ENCODE measurements at regions of chr6 and their contacts with region 1.

Region 1: GRCh38 chr6:5278047-5278446 is 16.7 kb downstream of the FARS2 start:
- DNase-seq: no peak
- H3K4me3 ChIP-seq: no peak overlapping the region
- H3K27ac ChIP-seq: no peak overlapping the region
- H3K4me1 ChIP-seq: peaks cover 0 to 12% (median 3%) of the 10 kb centered on the region in 4 experiments; a peak in 3 of 7 replicates
- H3K27me3 ChIP-seq: no peaks in the 10 kb centered on the region
- CTCF ChIP-seq: no peak
- EP300 ChIP-seq: no peak
- POLR2A ChIP-seq: no peak
- RAD21 ChIP-seq: no peak

Region 2: DNA sequence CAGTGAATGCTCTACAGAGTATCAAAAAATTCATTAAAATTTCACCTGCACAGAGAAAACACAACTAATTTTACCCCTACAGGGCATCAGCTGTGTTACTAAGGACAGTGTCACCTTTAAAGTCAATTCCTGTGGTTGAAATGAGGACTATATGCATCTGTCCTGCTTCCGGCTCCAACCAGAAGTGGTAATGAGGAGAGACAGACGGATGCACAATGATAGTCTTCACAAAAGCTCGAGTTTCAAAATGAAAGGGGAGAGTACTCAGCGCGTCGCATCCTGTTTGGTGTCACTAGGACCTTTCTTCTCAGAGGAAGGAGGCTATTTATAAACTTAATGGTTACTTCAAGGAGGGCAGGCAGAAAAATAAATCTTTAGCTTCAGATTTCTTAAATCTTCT is 103.8 kb before region 1 on chr6:
- CTCF ChIA-PET with region 1: no interaction called
- POLR2A ChIA-PET with region 1: no interaction called
- DNase-seq: no peak
- H3K4me3 ChIP-seq: no peak overlapping the region
- H3K27ac ChIP-seq: no peak overlapping the region
- H3K4me1 ChIP-seq: peaks cover 0 to 4% (median 0%) of the 10 kb centered on the region in 4 experiments; a peak in 2 of 7 replicates
- H3K27me3 ChIP-seq: no peaks in the 10 kb centered on the region; a peak in 1 of 7 replicates
- CTCF ChIP-seq: no peak
- EP300 ChIP-seq: no peak
- POLR2A ChIP-seq: no peak
- RAD21 ChIP-seq: no peak

Region 3: DNA sequence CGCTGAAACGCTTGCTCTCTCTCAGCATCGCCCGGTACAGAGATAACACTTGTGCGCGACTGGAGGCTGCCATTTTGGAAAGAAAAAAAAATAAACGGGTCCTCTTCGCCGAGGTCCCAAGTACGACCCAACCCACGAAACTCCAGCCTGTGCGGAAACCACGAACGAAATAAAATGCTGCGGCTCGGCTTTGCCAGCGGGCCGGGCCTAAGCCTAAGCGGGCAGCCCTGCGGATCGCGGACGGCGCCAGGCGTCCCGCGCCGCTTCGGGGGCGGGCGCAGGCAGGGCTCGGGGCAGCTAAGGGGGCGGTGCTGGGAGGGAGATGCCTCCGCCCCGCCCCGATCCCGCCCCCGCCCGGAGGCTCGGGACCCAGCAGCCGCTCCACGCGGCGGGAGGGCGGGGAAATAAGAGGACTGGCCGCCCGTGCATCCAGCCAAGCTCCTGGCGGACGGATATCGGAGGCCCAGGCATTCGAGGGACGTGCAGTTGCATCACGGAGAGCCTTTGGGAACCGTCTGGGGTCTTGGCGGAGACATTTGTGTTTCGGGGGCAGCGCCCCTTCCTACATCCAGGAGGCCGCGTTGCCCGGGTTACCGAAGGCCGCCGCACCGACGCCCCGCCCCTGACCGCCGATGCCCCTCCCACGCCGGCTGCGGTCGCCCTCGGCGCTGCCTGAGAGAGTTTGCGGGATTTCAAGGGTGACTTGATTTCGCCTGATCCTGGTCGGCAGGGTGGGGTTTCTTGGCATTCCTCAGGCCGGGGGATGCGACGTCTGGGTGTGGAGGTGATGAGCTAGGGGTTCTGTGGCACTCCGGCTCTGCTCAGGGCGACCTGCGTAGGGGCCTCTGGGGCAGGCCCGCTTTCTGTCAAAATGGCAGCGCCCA is 17.1 kb before region 1 on chr6 and contains the starts of genes FARS2 and LYRM4:
- CTCF ChIA-PET with region 1: interaction called, 5 read pairs
- POLR2A ChIA-PET with region 1: interaction called, 13 read pairs
- DNase-seq: peak; percentile 73 to 96
- H3K4me3 ChIP-seq: peak within 1 kb of the TSS; percentile 73 to 92 (median 82)
- H3K27ac ChIP-seq: peak within 1 kb of the TSS; percentile 98
- H3K4me1 ChIP-seq: peaks cover 0 to 1% (median 0%) of the 10 kb centered on the region in 4 experiments; a peak in 1 of 7 replicates
- H3K27me3 ChIP-seq: no peaks in the 10 kb centered on the region
- CTCF ChIP-seq: no peak
- EP300 ChIP-seq: 0 out of 3 replicates have a peak, but pooled peaks of 1 of the 2 experiments have one; percentile 43
- POLR2A ChIP-seq: peak; percentile 34 to 62
- RAD21 ChIP-seq: no peak
- total RNA-seq, gene FARS2: 14.0 and 14.4 TPM in 2 replicates
- total RNA-seq, gene LYRM4: 61.3 and 62.8 TPM in 2 replicates

Region 4: DNA sequence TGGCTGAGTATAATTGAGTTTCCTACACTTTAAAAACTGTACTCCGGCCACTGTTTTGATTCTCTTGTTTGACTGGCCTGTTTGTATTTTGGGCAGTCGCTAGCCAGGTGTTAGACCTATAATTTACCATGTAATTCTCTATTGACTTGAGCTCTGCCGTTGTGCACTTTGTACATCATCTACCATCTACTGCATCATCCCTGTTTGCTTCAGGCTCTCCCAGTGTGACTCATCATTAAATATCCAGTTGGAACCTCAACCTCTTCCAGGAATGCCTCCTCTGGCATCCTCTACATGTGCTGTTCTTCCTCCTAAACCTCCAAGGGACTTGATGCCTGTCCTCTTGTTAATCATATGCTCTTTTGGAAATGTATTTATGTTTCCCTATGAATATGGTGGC is 55.6 kb after region 1 on chr6:
- CTCF ChIA-PET with region 1: no interaction called
- POLR2A ChIA-PET with region 1: no interaction called
- DNase-seq: no peak
- H3K4me3 ChIP-seq: no peak overlapping the region
- H3K27ac ChIP-seq: no peak overlapping the region
- H3K4me1 ChIP-seq: no peaks in the 10 kb centered on the region
- H3K27me3 ChIP-seq: no peaks in the 10 kb centered on the region
- CTCF ChIP-seq: no peak
- EP300 ChIP-seq: no peak
- POLR2A ChIP-seq: no peak
- RAD21 ChIP-seq: no peak

Region 5: DNA sequence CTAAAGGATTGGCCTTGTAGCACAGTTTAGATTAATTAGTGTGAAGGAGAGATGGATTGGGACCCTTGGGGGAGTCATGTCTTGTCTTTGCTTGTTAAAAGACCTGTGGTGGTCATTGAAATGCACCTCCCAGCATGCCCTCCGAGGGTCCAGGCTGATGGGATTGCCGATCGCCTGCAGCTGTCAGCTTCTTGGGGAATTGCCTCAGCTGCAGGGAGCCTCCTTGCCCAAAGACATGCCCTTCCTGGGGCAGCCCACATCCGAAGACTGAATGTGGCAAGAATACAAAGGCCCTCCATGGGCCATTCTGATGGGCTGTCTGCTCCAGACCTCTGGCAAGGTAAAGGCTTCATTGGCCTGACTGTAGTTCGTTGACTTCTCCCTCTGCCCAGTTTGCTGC is 134.0 kb after region 1 on chr6:
- CTCF ChIA-PET with region 1: no interaction called
- POLR2A ChIA-PET with region 1: no interaction called
- DNase-seq: peak; percentile 23 to 66
- H3K4me3 ChIP-seq: no peak overlapping the region
- H3K27ac ChIP-seq: no peak overlapping the region; the same call in 1 of the 2 replicates
- H3K4me1 ChIP-seq: peaks cover 2 to 9% (median 5%) of the 10 kb centered on the region in 4 experiments; a peak in 5 of 7 replicates
- H3K27me3 ChIP-seq: no peaks in the 10 kb centered on the region
- CTCF ChIP-seq: no peak
- EP300 ChIP-seq: no peak
- POLR2A ChIP-seq: no peak
- RAD21 ChIP-seq: no peak

Region 6: GRCh38 chr6:5590187-5590586 is 312.1 kb after region 1 on chr6:
- CTCF ChIA-PET with region 1: no interaction called
- POLR2A ChIA-PET with region 1: no interaction called
- DNase-seq: no peak
- H3K4me3 ChIP-seq: no peak overlapping the region
- H3K27ac ChIP-seq: no peak overlapping the region
- H3K4me1 ChIP-seq: no peaks in the 10 kb centered on the region
- H3K27me3 ChIP-seq: no peaks in the 10 kb centered on the region
- CTCF ChIP-seq: no peak
- EP300 ChIP-seq: no peak
- POLR2A ChIP-seq: no peak
- RAD21 ChIP-seq: no peak